Activated T-helper 1 cell treated with anti-CD3 and anti-CD28 coated beads, Interleukin-12 subunit alpha, Interleukin-12 subunit beta, Interleukin-2, Interleukin-4 antibody, amounts not matched to agents 30 ng/mL and 10 ng/mL and 1 ng/mL, durations not matched to agents 14 hours and 24 hours and 36 hours (primary cell): ENCODE measurements at regions of chr3 and their contacts with region 1.

Region 1: DNA sequence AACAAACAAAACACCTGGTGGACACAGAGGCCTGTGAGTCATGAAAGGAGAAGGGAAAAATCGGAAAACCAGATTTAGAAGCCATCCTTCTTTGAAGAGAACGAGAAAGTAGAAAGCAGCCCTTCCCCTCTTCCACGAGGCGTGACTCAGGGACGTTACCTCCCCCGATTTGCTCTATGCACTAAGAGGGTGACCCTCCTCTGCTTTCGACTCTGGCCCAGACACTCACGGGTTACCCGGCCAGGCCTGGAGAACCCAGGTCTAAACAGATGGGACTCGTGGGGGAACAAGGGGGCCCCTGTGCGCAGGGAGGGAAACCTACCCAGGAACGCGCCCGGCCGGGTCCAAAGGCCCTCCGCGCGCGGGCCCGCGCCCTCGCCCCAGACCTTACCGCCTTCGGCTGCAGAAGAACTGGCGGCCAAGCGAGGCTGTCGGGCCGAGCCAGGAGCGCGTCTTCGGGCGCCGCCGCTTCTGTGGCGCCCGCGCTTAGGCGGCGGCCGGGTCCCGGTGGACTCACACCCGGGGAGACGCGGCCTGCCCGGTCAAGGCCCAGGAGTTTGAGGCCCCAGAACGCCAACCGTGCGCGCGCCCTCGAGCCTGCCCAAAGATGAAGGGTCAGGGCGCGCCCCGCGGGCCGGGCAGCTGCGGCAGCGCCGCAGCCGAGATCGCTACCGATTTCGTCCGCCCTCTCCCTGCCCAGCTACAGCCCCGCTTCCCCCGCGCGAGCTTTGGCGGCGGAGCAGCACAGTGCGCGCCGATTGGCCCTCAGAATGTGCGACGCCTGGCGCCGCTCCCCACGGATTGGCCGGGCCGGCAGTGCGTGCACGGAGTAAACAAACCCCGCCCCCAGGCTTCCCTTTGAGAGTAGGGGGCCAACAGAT is at the start of gene TFDP2:
- DNase-seq: peak; percentile 88
- H3K4me3 Mint-ChIP-seq: peak within 1 kb of the TSS; percentile 90
- H3K27ac Mint-ChIP-seq: peak within 1 kb of the TSS; percentile 80
- H3K4me1 Mint-ChIP-seq: peaks cover 18% of the 10 kb centered on the region
- H3K27me3 Mint-ChIP-seq: peaks cover 4% of the 10 kb centered on the region
- total RNA-seq, gene TFDP2: 19.7 and 27.5 TPM in 2 replicates

Region 2: DNA sequence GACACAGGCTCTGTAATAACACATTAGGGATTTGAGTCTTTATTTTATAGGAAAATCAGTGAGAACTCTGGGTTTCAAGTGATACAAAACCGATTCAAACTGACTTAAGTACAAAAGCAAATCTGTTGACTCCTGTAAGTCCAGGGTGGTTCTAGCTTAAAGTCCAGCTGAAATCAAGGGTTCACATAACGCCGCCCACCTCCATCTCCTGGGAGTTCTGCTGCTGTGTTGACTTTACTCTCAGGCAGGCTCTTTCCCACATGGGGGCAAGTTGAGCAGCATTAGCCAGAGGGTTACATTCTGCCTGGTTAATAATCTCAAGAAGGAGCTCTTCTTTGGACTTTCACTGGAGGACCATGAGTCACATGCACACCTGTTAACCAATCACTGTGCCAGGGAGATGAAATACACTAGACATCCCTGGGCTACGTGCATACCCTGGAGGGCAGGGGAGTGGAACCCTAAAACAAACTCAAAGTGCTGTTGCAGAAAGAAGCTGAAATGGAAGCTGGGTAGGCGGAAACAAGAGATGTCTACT is 420.6 kb before region 1 on chr3:
- intact Hi-C with region 1: no loop called
- DNase-seq: no peak
- H3K4me3 Mint-ChIP-seq: no peak overlapping the region
- H3K27ac Mint-ChIP-seq: no peak overlapping the region
- H3K4me1 Mint-ChIP-seq: no peaks in the 10 kb centered on the region
- H3K27me3 Mint-ChIP-seq: peaks cover 6% of the 10 kb centered on the region

Region 3: GRCh38 chr3:142028243-142028777 is 120.7 kb before region 1 on chr3:
- intact Hi-C with region 1: loop called (anchors 2 kb)
- DNase-seq: peak; percentile 22
- H3K4me3 Mint-ChIP-seq: peak overlapping the region; percentile 87
- H3K27ac Mint-ChIP-seq: peak overlapping the region; percentile 49
- H3K4me1 Mint-ChIP-seq: peaks cover 18% of the 10 kb centered on the region
- H3K27me3 Mint-ChIP-seq: no peaks in the 10 kb centered on the region

Region 4: GRCh38 chr3:142226484-142226883 is 77.5 kb after region 1 on chr3:
- intact Hi-C with region 1: loop called (anchors 1 kb)
- DNase-seq: no peak
- H3K4me3 Mint-ChIP-seq: peak overlapping the region; percentile 72
- H3K27ac Mint-ChIP-seq: no peak overlapping the region
- H3K4me1 Mint-ChIP-seq: peaks cover 20% of the 10 kb centered on the region
- H3K27me3 Mint-ChIP-seq: no peaks in the 10 kb centered on the region

Region 5: DNA sequence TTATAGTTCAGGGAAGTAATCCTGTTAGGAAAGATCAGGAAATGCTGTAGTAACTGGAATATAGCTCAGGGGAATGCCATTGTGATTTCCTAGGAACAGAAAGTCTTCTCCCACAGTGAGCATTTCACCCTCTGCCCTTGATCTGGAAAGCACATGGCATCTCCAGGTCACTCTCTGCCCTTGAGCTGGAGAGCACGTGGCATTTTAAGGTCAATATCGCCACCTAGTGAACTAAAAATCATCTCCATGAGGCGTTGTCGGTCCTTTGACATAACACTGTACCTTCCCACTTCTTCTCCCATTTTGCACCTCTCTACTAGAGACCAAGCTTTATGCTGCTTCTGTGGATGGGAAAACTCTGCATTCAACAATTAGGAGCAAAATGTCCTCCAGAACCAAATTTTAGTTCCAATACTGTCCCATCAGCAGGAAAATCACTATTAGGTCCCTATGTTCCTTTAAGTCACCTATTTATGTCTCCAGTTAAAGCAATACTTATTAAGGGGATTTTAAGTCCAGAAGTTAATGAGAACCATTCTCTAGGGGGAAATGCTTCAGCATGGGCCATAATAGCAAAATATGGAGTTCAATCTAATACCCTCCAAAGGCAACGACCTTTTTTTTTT is 131.0 kb after region 1 on chr3:
- intact Hi-C with region 1: loop called (anchors 1 kb)
- DNase-seq: peak; percentile 36
- H3K4me3 Mint-ChIP-seq: no peak overlapping the region
- H3K27ac Mint-ChIP-seq: no peak overlapping the region
- H3K4me1 Mint-ChIP-seq: peaks cover 24% of the 10 kb centered on the region
- H3K27me3 Mint-ChIP-seq: no peaks in the 10 kb centered on the region

Region 6: DNA sequence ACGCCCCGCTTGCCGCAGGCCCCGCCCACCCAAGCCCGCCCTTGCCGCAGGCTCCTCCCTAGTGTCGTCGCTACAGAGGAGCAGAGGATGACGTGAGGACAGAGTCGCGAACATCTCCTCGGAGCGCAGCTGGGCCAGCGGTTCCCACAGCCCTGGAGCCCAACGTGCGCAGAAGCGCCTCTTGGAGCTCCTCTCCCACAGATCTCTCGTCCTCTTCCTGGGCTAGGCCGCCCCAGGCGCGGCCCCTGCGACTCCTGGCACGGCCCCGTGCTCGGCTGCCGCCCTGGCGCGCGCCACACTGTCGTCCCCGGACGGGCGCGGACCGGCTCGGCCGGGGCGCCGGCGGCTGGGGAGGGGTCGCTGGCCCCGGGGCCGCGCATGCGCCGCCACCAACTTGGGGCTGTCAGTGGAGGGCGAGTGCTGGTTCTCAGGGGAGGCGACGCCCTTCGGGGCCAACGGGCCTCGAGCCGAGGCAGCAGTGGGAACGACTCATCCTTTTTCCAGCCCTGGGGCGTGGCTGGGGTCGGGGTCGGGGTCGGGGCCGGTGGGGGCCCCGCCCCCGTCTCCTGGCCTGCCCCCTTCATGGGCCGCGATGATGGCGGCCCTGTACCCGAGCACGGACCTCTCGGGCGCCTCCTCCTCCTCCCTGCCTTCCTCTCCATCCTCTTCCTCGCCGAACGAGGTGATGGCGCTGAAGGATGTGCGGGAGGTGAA is 575.1 kb after region 1 on chr3 and contains the start of gene TRPC1:
- intact Hi-C with region 1: loop called (anchors 2 kb)
- DNase-seq: peak; percentile 73
- H3K4me3 Mint-ChIP-seq: peak within 1 kb of the TSS; percentile 86
- H3K27ac Mint-ChIP-seq: peak within 1 kb of the TSS; percentile 83
- H3K4me1 Mint-ChIP-seq: peaks cover 4% of the 10 kb centered on the region
- H3K27me3 Mint-ChIP-seq: peaks cover 50% of the 10 kb centered on the region
- total RNA-seq, gene TRPC1: 0.66 and 1.1 TPM in 2 replicates